ENCODE measurements at regions of chr3 and their contacts with region 1.

Region 1: GRCh38 chr3:186570096-186570940 is at the start of gene DNAJB11:
- DNase-seq: peak; percentile 99 to 100 (median 100)

Region 2: DNA sequence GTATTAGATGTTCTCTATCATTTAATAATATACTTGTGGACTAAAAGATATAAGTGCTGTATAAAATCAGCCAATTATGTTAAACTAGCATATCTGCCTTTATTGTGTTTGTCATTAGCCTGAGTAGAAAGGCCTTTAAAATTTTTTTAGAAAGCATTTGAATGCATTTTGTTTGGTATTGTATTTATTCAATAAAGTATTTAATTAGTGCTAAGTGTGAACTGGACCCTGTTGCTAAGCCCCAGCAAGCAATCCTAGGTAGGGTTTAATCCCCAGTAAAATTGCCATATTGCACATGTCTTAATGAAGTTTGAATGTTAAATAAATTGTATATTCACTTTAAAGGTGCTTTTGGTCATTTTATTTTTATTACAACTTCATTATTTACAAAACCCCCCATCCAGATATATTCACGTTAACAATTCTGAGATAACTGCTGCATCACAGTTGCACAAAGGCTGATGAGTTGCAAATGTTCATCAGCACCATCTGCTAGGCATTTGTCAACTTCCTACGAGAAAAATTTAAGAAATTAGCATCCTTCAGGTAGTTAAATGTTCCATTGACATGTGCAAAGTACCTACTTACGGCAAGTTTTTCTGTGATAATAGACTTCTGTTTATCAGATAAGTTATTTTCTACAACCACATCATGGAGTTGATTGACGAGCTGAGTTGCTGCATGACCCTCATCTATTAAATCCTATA is 219.4 kb after region 1 on chr3:
- intact Hi-C with region 1: loop called (anchors 5 kb)
- DNase-seq: no peak

Region 3: DNA sequence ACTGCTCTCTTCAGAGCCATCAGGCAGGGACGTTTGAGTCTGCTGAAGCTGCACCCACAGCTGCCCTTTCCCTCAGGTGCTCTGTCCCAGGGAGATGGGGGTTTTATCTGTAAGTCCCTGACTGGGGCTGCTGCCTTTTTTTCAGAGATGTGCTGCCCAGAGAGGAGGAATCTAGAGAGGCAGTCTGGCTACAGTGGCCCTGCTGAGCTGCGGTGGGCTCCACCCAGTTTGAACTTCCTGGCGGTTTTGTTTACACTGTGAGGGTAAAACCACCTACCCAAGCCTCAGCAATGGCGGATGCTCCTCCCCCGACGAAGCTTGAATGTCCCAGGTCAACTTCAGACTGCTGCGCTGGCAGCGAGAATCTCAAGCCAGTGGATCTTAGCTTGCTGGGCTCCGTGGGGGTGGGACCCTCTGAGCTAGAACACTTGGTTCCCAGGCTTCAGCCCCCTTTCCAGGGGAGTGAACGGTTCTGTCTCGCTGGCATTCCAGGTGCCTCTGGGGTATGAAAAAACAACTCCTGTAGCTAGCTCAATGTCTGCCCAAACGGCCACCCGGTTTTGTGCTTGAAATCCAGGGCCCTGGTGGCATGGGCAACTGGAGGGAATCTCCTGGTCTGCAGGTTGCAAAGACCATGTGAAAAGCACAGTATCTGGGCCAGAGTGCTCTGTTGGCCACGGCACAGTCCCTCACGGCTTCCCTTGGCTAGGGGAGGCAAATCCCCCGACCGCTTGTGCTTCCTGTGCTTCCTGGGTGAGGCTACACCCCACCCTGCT is 338.9 kb after region 1 on chr3:
- intact Hi-C with region 1: no loop called
- DNase-seq: no peak